ENCODE measurements at regions of chr6 and their contacts with region 1.

Region 1: GRCh38 chr6:81981812-81982211 is 229.3 kb upstream of the TENT5A start:
- DNase-seq: no peak
- ATAC-seq: peak in 1 of 2 donors; percentile 48

Region 2: GRCh38 chr6:81241126-81242041 is 740.4 kb before region 1 on chr6:
- intact Hi-C with region 1: loop called in 1 of 2 experiments (anchors 5 kb)
- DNase-seq: no peak
- ATAC-seq: peak in 1 of 2 donors; percentile 57

Region 3: DNA sequence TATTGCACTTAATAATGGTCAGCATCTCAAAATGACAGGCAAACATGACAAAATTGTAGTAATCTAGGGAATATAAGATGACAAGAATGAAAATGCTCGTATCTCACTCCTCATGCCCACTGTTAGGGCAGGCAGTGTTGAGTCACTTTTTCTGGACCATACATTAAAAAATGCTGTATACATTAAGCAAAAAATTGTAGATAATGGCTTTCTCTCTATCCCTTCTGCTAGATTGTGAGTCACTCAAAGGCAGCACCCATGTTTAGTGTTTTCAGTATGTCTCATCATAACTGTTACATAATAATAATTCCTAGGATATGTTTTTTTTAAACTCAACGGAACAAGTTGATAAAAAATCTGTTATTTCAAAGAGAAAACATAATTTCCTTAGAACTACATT is 428.6 kb before region 1 on chr6:
- intact Hi-C with region 1: no loop called
- DNase-seq: no peak
- ATAC-seq: peak in 1 of 2 donors; percentile 35

Region 4: DNA sequence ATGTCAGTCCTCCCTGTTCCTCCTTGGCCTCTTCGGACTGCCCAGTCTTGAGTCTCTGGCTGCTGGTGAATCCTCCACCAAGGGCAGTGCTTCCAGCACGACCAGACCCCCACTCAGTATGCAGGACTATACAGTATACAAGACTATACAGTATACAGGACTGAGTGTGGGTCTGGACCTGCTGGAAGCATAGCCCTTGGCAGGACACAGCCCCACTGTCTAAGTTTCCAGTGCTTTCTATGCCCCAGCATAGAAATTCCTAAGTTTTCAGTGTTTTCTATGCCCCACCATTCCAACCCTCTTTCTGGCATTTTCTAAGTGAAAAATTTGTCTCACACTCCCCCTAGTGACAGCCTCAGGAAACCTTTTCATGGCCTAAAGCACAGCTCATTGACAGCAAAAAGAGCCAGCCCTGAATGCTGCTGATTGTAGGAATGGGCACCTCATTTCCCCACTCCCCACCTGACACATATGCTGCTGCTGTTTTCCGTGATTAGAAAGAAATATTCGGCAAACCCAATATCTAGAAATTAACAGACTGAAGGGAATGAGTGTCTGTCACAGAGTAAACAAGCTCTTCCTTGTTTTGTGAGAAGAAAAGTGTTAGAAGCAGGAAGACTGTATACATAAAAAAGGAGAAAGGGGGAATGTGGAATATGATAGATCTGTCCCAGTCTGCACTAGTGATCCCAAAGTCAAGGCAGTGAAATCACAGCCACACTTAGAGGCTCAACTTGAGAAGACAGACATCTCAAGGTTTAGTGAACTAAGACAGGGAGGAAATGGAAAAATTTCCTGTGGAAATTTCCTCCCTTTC is 58.8 kb after region 1 on chr6:
- intact Hi-C with region 1: no loop called
- DNase-seq: no peak
- ATAC-seq: peak; percentile 85 to 86

Region 5: GRCh38 chr6:82322386-82322785 is 340.6 kb after region 1 on chr6:
- intact Hi-C with region 1: no loop called
- DNase-seq: no peak
- ATAC-seq: peak in 1 of 2 donors; percentile 22

Measured in left cardiac atrium (tissue), 4 donors.